PC-9 (cell line): ENCODE measurements at regions of chr10 and their contacts with region 1.

Region 1: DNA sequence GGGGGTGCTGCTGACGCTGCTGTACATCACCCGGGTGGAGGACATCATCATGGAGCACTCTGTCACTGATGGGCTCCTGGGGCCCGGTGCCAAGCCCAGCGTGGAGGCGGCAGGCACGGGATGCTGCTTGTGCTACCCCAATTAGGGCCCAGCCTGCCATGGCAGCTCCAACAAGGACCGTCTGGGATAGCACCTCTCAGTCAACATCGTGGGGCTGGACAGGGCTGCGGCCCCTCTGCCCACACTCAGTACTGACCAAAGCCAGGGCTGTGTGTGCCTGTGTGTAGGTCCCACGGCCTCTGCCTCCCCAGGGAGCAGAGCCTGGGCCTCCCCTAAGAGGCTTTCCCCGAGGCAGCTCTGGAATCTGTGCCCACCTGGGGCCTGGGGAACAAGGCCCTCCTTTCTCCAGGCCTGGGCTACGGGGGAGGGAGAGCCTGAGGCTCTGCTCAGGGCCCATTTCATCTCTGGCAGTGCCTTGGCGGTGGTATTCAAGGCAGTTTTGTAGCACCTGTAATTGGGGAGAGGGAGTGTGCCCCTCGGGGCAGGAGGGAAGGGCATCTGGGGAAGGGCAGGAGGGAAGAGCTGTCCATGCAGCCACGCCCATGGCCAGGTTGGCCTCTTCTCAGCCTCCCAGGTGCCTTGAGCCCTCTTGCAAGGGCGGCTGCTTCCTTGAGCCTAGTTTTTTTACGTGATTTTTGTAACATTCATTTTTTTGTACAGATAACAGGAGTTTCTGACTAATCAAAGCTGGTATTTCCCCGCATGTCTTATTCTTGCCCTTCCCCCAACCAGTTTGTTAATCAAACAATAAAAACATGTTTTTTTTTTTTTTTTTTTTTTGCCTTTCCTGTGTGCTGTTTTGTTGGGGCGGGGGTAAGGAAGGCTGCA is 55.8 kb downstream of the TSPAN15 start:
- DNase-seq: peak; percentile 38 to 68
- H3K4me3 ChIP-seq: no peak overlapping the region
- H3K27ac ChIP-seq: peak overlapping the region; percentile 52
- H3K4me1 ChIP-seq: peaks cover 11% of the 10 kb centered on the region
- H3K27me3 ChIP-seq: no peaks in the 10 kb centered on the region
- CTCF ChIP-seq: no peak

Region 2: DNA sequence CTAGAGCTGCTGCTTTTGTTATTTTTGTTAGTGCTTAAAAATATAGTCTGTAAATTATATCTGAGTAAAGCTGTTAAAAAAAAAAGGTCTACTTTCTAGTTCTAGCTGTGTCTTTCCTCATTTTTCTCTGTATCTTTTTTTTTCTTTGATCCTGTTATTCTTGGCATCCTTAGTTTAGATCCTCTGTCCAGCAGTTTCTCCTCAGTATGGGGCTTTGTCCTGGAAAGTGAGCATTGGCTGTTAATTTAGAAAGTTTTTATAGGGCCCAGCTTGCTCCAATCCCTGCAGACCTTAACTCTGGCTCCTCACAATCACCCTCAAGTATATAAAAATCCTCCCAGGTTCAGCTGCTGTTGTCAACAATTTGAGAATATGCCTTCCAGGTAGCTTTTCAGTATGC is 582.5 kb before region 1 on chr10:
- CTCF ChIA-PET with region 1: interaction called, 15 read pairs
- POLR2A ChIA-PET with region 1: no interaction called
- intact Hi-C with region 1: no loop called
- DNase-seq: no peak
- H3K4me3 ChIP-seq: no peak overlapping the region
- H3K27ac ChIP-seq: no peak overlapping the region
- H3K4me1 ChIP-seq: no peaks in the 10 kb centered on the region
- H3K27me3 ChIP-seq: no peaks in the 10 kb centered on the region
- CTCF ChIP-seq: no peak

Region 3: GRCh38 chr10:69458426-69459108 is 48.5 kb before region 1 on chr10:
- CTCF ChIA-PET with region 1: no interaction called
- POLR2A ChIA-PET with region 1: no interaction called
- intact Hi-C with region 1: loop called (anchors 2 kb)
- DNase-seq: peak; percentile 97 to 98
- H3K4me3 ChIP-seq: peak overlapping the region; percentile 37
- H3K27ac ChIP-seq: peak overlapping the region; percentile 95
- H3K4me1 ChIP-seq: peaks cover 88% of the 10 kb centered on the region
- H3K27me3 ChIP-seq: no peaks in the 10 kb centered on the region
- CTCF ChIP-seq: no peak